ENCODE measurements at regions of chrX and their contacts with region 1.

Region 1: GRCh38 chrX:115147220-115147619 is 42.0 kb upstream of the RBMXL3 start:
- DNase-seq: no peak
- ATAC-seq: no peak
- H3K4me3 ChIP-seq: no peak overlapping the region
- H3K27ac ChIP-seq: no peak overlapping the region
- H3K4me1 ChIP-seq: no peaks in the 10 kb centered on the region
- H3K27me3 ChIP-seq: no peaks in the 10 kb centered on the region

Region 2: DNA sequence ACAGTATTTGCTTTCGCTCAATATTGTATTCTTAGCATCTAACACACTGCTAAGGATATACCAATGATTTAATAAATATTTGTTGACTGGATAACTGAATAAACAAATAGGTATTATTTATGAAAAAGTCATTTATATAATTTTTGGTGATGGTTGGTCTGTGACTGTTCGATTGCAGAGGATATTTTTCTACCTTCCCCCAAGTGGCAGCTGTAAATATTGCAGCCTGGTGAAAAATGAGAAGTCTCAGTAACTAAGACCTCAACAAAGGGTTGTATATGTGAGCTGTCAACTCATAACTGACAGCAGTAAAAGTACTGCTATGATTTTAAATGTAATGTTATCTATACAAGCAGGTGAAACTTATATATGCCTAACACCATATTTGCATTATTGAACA is 527.3 kb before region 1 on chrX:
- intact Hi-C with region 1: loop called in 1 of 2 experiments (anchors 5 kb)
- DNase-seq: no peak
- ATAC-seq: no peak
- H3K4me3 ChIP-seq: no peak overlapping the region
- H3K27ac ChIP-seq: no peak overlapping the region
- H3K4me1 ChIP-seq: no peaks in the 10 kb centered on the region
- H3K27me3 ChIP-seq: no peaks in the 10 kb centered on the region

Measured in aorta (tissue), 5 donors.